ENCODE measurements at regions of chr1 and their contacts with region 1.

Region 1: GRCh38 chr1:197744979-197745378 is 30.3 kb downstream of the DENND1B start:
- DNase-seq: no peak
- ATAC-seq: no peak
- H3K4me3 ChIP-seq: no peak overlapping the region
- H3K27ac ChIP-seq: no peak overlapping the region
- H3K4me1 ChIP-seq: no peaks in the 10 kb centered on the region
- H3K27me3 ChIP-seq: no peaks in the 10 kb centered on the region
- CTCF ChIP-seq: no peak

Region 2: GRCh38 chr1:197526736-197527371 is 218.1 kb before region 1 on chr1:
- CTCF ChIA-PET with region 1: no interaction called
- POLR2A ChIA-PET with region 1: no interaction called
- in situ Hi-C with region 1: no loop called
- intact Hi-C with region 1: no loop called
- DNase-seq: no peak
- ATAC-seq: no peak
- H3K4me3 ChIP-seq: no peak overlapping the region
- H3K27ac ChIP-seq: no peak overlapping the region
- H3K4me1 ChIP-seq: no peaks in the 10 kb centered on the region
- H3K27me3 ChIP-seq: no peaks in the 10 kb centered on the region
- CTCF ChIP-seq: peak; percentile 9; the same call in 1 of the 2 replicates

Region 3: GRCh38 chr1:197638316-197638715 is 106.7 kb before region 1 on chr1:
- CTCF ChIA-PET with region 1: no interaction called
- POLR2A ChIA-PET with region 1: no interaction called
- in situ Hi-C with region 1: no loop called
- intact Hi-C with region 1: no loop called
- DNase-seq: no peak
- ATAC-seq: no peak
- H3K4me3 ChIP-seq: no peak overlapping the region
- H3K27ac ChIP-seq: no peak overlapping the region
- H3K4me1 ChIP-seq: no peaks in the 10 kb centered on the region
- H3K27me3 ChIP-seq: no peaks in the 10 kb centered on the region
- CTCF ChIP-seq: no peak

Region 4: DNA sequence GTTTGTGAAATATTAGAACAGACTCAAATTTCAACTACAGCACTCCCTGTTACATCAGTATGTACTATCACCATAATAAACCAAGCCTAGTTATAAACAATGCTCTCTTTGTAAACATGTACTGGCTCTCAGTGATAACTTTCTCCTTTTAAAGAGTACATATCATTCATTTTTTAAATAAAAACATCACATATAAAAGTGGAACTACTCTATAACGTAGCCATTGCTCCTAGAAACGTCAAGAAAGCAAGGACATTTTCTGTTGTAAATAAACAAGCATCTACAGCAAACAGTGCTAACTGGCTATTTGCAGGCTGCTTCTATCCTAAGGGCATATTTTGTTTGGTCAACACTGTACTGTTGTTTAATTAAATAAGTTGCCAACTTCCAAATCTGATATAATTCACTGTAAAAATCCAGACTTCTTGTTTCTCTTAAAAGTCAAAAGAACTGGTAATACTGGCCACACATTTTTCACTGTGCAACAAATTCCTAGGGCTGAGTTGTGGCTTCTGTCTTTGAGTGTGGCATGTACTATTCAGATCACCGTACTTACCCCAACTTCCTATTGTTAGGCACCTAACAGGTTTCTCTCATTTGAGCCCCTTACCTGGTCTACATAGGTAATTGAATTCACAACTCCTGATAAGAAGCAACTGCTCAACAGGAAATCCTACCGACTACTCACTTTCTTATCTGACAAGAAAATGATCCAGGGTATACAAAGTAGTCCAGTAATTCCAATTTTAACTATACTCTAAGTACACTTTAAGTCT is 81.6 kb before region 1 on chr1:
- CTCF ChIA-PET with region 1: no interaction called
- POLR2A ChIA-PET with region 1: no interaction called
- in situ Hi-C with region 1: no loop called
- intact Hi-C with region 1: no loop called
- DNase-seq: no peak
- ATAC-seq: peak; percentile 77
- H3K4me3 ChIP-seq: no peak overlapping the region; a peak in 1 of 4 replicates
- H3K27ac ChIP-seq: peak overlapping the region; percentile 52; the same call in 1 of the 2 replicates
- H3K4me1 ChIP-seq: peaks cover 11% of the 10 kb centered on the region
- H3K27me3 ChIP-seq: no peaks in the 10 kb centered on the region
- CTCF ChIP-seq: no peak

Region 5: DNA sequence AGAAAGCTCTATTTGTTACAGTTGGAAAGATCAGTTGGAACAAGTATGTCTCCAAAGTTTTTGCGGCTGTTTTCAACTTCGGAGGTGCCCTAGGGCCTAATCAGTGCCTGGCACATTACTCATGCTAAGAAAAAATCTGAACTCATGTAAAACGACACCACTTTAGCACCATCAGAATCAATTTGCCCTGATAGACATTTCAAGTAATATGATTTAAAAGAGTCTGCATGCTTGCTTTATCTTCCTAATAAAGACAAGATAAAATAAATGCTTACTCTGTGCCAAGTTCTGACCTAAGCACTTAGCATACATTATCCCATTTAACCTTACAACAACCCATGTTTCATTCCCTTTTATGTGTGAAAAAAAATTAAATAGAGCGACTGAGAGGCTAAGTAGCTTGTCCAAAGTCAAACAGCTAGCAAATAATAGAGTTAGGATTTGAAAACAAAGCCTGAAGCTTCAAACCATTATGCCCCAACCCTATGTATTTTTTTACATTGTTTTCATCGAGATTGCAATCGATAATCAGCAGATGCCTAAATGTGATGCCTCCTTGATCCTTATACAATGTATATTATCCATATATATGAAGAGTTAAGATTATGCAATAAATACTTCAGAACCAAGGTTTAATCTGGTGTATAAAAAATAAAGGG is 61.0 kb before region 1 on chr1:
- CTCF ChIA-PET with region 1: no interaction called
- POLR2A ChIA-PET with region 1: no interaction called
- in situ Hi-C with region 1: no loop called
- intact Hi-C with region 1: loop called (anchors 10 kb)
- DNase-seq: no peak
- ATAC-seq: no peak
- H3K4me3 ChIP-seq: no peak overlapping the region
- H3K27ac ChIP-seq: no peak overlapping the region
- H3K4me1 ChIP-seq: no peaks in the 10 kb centered on the region
- H3K27me3 ChIP-seq: no peaks in the 10 kb centered on the region
- CTCF ChIP-seq: no peak

Region 6: GRCh38 chr1:197696372-197696771 is 48.6 kb before region 1 on chr1:
- CTCF ChIA-PET with region 1: no interaction called
- POLR2A ChIA-PET with region 1: no interaction called
- in situ Hi-C with region 1: no loop called
- intact Hi-C with region 1: no loop called
- DNase-seq: no peak
- ATAC-seq: no peak
- H3K4me3 ChIP-seq: no peak overlapping the region
- H3K27ac ChIP-seq: no peak overlapping the region
- H3K4me1 ChIP-seq: no peaks in the 10 kb centered on the region; the same call in 1 of the 2 replicates
- H3K27me3 ChIP-seq: no peaks in the 10 kb centered on the region
- CTCF ChIP-seq: no peak

Measured in Panc1 (cell line).